MCF 10A (cell line): ENCODE measurements at regions of chr2 and their contacts with region 1.

Region 1: GRCh38 chr2:11446733-11447248 is 19.2 kb downstream of the E2F6 start:
- DNase-seq: peak; percentile 72
- H3K4me3 Mint-ChIP-seq: no peak overlapping the region
- H3K27ac Mint-ChIP-seq: no peak overlapping the region
- H3K4me1 Mint-ChIP-seq: no peaks in the 10 kb centered on the region
- H3K27me3 Mint-ChIP-seq: no peaks in the 10 kb centered on the region
- CTCF ChIP-seq: peak; percentile 88

Region 2: DNA sequence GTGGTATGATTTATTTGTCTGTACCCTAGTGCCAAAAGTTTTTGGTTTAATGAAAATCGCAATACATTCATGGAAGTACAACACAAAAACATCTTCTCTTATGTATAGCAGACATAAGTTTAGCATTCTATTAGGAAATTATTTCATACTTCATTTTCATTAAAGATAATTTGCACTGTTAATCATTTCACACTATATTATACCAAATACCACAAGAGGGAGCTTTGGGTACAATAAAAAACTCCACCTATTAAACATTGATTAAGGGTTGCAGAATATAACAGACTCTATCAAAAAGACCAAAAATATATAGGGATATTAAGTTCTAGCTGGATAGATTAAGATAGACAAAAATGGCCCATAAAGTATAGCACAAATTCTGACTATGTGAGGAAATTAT is 212.5 kb before region 1 on chr2:
- CTCF ChIA-PET with region 1: interaction called, 27 read pairs
- POLR2A ChIA-PET with region 1: interaction called, 8 read pairs
- intact Hi-C with region 1: loop called (anchors 1 kb)
- DNase-seq: peak; percentile 36
- H3K4me3 Mint-ChIP-seq: no peak overlapping the region
- H3K27ac Mint-ChIP-seq: no peak overlapping the region
- H3K4me1 Mint-ChIP-seq: no peaks in the 10 kb centered on the region
- H3K27me3 Mint-ChIP-seq: no peaks in the 10 kb centered on the region
- CTCF ChIP-seq: peak; percentile 64

Region 3: GRCh38 chr2:11457935-11458334 is 11.1 kb after region 1 on chr2:
- CTCF ChIA-PET with region 1: interaction called, 11 read pairs
- POLR2A ChIA-PET with region 1: no interaction called
- intact Hi-C with region 1: no loop called
- DNase-seq: no peak
- H3K4me3 Mint-ChIP-seq: no peak overlapping the region
- H3K27ac Mint-ChIP-seq: peak overlapping the region; percentile 7
- H3K4me1 Mint-ChIP-seq: peaks cover 32% of the 10 kb centered on the region
- H3K27me3 Mint-ChIP-seq: no peaks in the 10 kb centered on the region
- CTCF ChIP-seq: no peak

Region 4: DNA sequence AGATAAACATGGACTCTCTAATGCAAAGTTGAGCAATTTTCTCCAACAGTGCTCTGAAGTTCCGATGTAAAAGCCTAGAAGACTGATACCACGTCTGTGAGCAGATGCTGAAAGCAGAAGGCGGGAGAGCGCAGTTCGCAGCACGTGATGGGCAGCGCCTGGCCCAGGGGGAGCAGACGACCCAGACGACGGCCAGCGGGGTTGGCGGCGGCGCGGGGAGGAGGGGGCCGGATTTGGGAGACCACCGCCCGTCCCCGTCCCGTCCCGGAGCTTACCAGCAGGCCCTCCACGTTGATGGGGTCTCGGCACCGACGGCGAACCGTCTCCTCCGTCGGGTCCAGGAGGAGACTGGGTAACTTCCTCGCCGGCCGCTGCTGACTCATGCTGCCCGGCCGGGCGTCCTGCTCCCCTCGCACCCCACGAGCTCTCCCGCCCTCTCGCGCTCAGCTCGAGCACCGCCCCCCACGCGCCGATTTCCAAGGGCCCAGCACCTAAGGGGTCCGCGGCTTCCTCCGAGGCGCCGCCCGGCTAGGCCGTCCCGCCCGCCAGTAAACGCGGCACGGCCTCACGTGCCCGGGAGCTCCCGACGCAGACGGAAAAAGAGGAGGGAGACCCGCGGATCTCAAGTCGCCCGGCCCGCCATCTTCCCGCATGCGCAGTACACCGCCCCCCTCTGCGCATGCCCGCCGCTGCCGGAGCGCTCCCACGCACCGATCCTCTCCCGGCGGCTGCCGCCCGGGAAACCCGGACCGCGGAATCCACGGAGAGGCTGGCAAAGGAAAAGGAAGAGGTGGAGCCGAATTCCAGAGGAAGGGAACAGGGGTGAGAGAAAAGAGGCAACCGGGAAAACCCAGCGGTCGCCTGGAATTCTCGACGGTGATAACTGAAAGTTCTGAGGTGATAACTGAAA is 19.0 kb after region 1 on chr2 and contains the start of gene E2F6:
- CTCF ChIA-PET with region 1: interaction called, 13 read pairs
- POLR2A ChIA-PET with region 1: interaction called, 5 read pairs
- intact Hi-C with region 1: no loop called
- DNase-seq: peak; percentile 94
- H3K4me3 Mint-ChIP-seq: peak within 1 kb of the TSS; percentile 93
- H3K27ac Mint-ChIP-seq: peak within 1 kb of the TSS; percentile 87
- H3K4me1 Mint-ChIP-seq: peaks cover 15% of the 10 kb centered on the region
- H3K27me3 Mint-ChIP-seq: no peaks in the 10 kb centered on the region
- CTCF ChIP-seq: no peak
- total RNA-seq, gene E2F6: 16.1 and 16.6 TPM in 2 replicates

Region 5: GRCh38 chr2:11753886-11754699 is 307.3 kb after region 1 on chr2:
- CTCF ChIA-PET with region 1: no interaction called
- POLR2A ChIA-PET with region 1: no interaction called
- intact Hi-C with region 1: no loop called
- DNase-seq: peak; percentile 88
- H3K4me3 Mint-ChIP-seq: peak overlapping the region; percentile 39
- H3K27ac Mint-ChIP-seq: peak overlapping the region; percentile 62
- H3K4me1 Mint-ChIP-seq: peaks cover 54% of the 10 kb centered on the region
- H3K27me3 Mint-ChIP-seq: no peaks in the 10 kb centered on the region
- CTCF ChIP-seq: no peak